SK-N-SH (cell line): ENCODE measurements at regions of chr22 and their contacts with region 1.

Region 1: GRCh38 chr22:17910561-17911311 is 113.6 kb downstream of the MICAL3 start:
- DNase-seq: peak; percentile 68
- H3K4me3 ChIP-seq: peak overlapping the region in 1 of 2 experiments; percentile 57; a peak in 2 of 4 replicates
- H3K27ac ChIP-seq: peak overlapping the region; percentile 60 to 94
- H3K4me1 ChIP-seq: peaks cover 20 to 33% of the 10 kb centered on the region in 2 experiments
- H3K27me3 ChIP-seq: no peaks in the 10 kb centered on the region
- CTCF ChIP-seq: peak; percentile 66
- EP300 ChIP-seq: peak in 1 of 2 experiments; percentile 55; a peak in 1 of 4 replicates
- RAD21 ChIP-seq: peak; percentile 88

Region 2: GRCh38 chr22:17980638-17981051 is 69.9 kb after region 1 on chr22:
- CTCF ChIA-PET with region 1: interaction called, 10 read pairs
- POLR2A ChIA-PET with region 1: no interaction called
- DNase-seq: peak; percentile 63
- H3K4me3 ChIP-seq: no peak overlapping the region; a peak in 1 of 4 replicates
- H3K27ac ChIP-seq: peak overlapping the region in 1 of 2 experiments; percentile 24; a peak in 2 of 4 replicates
- H3K4me1 ChIP-seq: peaks cover 0 to 21% of the 10 kb centered on the region in 2 experiments; a peak in 3 of 4 replicates
- H3K27me3 ChIP-seq: no peaks in the 10 kb centered on the region
- CTCF ChIP-seq: no peak
- EP300 ChIP-seq: no peak
- RAD21 ChIP-seq: no peak

Region 3: DNA sequence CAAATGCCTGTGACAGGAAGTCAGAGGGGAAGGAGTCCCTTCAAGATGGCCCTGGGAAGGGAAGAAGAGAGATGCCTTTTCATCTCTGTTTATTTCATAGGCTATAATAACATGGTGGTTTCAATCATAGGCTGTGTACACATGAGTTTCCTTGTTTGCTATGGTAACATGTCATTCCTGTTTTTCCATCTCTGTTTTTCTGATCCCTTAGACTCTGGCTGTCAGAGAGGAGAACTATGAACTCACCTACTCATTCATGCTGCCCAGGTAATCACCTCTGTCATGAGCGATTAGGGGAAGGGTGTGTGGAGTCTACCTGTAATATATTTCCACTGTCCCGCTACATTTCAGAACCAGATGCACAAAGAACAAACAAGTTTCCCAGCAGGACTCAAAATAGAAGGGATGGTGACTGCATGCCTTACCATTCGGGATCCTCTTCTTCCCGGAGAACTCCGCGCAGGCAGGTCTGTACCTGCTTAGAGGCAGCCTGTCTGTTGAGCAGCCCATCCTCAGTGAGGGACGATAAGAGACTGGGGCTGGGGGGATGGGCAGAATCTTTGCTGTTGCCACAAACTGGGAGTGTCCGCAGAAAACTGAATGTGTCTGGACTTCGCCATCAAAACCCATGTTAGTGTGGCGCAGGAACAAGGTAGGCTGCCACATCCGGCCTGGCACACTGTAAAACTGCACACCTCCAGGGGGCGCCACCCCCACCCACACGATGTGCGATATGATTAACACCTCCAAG is 160.0 kb after region 1 on chr22:
- CTCF ChIA-PET with region 1: interaction called, 58 read pairs
- POLR2A ChIA-PET with region 1: no interaction called
- DNase-seq: no peak
- H3K4me3 ChIP-seq: no peak overlapping the region
- H3K27ac ChIP-seq: no peak overlapping the region
- H3K4me1 ChIP-seq: no peaks in the 10 kb centered on the region; a peak in 1 of 4 replicates
- H3K27me3 ChIP-seq: no peaks in the 10 kb centered on the region
- CTCF ChIP-seq: peak; percentile 54
- EP300 ChIP-seq: no peak
- RAD21 ChIP-seq: no peak

Region 4: DNA sequence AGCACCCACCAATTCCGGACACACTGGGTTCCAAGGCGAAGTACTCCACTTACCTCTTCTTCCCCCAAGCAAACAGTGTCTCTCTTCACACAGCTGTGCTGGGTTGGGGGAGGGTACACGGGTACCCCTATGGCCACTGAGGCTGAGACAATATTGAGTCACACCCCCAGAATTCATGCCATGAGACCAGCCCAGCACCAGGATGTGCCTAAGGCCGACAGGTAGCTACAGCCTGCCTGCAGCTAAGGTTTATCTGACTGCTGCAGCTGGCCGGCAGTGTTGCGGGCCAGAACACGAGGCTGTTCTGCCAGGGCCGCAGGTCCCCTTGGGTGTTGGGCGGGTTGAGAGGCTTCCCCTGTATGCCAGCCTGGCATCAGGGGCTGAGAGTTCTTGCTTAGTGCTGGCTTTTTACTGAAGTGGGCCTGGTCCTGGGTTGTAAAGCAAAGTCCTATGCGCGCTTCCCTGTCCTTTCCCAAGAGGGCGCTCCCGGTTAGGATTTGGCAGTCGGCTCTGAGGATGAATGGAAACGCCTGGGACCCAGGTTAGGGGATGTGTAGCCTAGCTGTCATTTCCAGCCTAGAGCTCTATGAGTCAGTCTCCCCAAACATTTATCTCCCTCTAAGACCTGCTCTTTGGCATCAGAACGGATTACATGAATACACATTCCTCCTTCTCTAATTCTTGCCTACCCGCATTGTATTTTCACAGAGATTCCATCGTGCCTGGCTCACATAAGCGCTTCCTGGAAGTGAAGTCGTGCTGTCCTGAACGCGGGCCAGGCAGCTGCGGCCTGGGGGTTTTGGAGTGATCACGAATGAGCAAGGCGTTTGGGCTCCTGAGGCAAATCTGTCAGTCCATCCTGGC is 246.3 kb after region 1 on chr22:
- CTCF ChIA-PET with region 1: no interaction called
- POLR2A ChIA-PET with region 1: no interaction called
- DNase-seq: peak; percentile 83
- H3K4me3 ChIP-seq: peak overlapping the region in 1 of 2 experiments; percentile 0; a peak in 1 of 4 replicates
- H3K27ac ChIP-seq: peak overlapping the region in 1 of 2 experiments; percentile 43; a peak in 1 of 4 replicates
- H3K4me1 ChIP-seq: peaks cover 0 to 3% of the 10 kb centered on the region in 2 experiments; a peak in 1 of 4 replicates
- H3K27me3 ChIP-seq: no peaks in the 10 kb centered on the region
- CTCF ChIP-seq: peak; percentile 85
- EP300 ChIP-seq: no peak
- RAD21 ChIP-seq: peak; percentile 88